Activated naive CD4-positive, alpha-beta T cell treated with anti-CD3 and anti-CD28 coated beads, Interleukin-2, amount 10 ng/mL, durations not matched to agents 7 days and 5 days (primary cell): ENCODE measurements at regions of chr3 and their contacts with region 1.

Region 1: DNA sequence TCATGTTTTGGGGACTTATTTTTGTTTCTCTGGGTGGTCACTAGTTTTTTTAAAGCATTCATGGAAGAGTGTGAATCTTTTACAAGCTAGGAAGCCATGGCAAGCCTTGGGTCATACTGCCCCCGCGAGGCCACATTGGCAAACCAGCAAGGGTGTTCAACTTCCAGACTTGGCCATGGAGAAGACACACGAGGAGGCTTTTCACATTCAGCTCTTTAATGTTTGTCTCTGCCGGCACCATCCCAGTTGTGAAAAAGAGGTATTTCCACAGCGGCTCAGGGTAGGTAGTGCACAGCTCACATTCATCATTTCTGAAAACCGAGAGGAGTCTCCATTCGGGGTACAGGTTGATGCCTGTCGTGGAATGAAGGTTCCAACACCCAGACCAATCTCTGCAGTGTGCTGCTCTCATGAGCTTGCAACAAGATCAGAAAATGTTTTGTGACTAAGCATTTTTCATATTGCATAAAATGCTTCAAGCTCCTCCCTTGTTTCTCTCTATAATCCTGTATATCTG is 7.7 kb downstream of the CCR5 start:
- DNase-seq: peak; percentile 81
- H3K4me3 Mint-ChIP-seq: no peak overlapping the region
- H3K27ac Mint-ChIP-seq: no peak overlapping the region
- H3K4me1 Mint-ChIP-seq: peaks cover 65% of the 10 kb centered on the region
- H3K27me3 Mint-ChIP-seq: peaks cover 15% of the 10 kb centered on the region

Region 2: GRCh38 chr3:46089237-46090011 is 289.1 kb before region 1 on chr3:
- CTCF ChIA-PET with region 1: interaction called, 92 read pairs
- DNase-seq: peak; percentile 25
- H3K4me3 Mint-ChIP-seq: no peak overlapping the region
- H3K27ac Mint-ChIP-seq: no peak overlapping the region
- H3K4me1 Mint-ChIP-seq: peaks cover 40% of the 10 kb centered on the region
- H3K27me3 Mint-ChIP-seq: peaks cover 16% of the 10 kb centered on the region

Region 3: GRCh38 chr3:46214751-46215352 is 163.6 kb before region 1 on chr3:
- CTCF ChIA-PET with region 1: interaction called, 228 read pairs
- DNase-seq: peak; percentile 40
- H3K4me3 Mint-ChIP-seq: no peak overlapping the region
- H3K27ac Mint-ChIP-seq: no peak overlapping the region
- H3K4me1 Mint-ChIP-seq: peaks cover 21% of the 10 kb centered on the region
- H3K27me3 Mint-ChIP-seq: peaks cover 8% of the 10 kb centered on the region